Natural killer cell (primary cell): ENCODE measurements at regions of chr7 and their contacts with region 1.

Region 1: DNA sequence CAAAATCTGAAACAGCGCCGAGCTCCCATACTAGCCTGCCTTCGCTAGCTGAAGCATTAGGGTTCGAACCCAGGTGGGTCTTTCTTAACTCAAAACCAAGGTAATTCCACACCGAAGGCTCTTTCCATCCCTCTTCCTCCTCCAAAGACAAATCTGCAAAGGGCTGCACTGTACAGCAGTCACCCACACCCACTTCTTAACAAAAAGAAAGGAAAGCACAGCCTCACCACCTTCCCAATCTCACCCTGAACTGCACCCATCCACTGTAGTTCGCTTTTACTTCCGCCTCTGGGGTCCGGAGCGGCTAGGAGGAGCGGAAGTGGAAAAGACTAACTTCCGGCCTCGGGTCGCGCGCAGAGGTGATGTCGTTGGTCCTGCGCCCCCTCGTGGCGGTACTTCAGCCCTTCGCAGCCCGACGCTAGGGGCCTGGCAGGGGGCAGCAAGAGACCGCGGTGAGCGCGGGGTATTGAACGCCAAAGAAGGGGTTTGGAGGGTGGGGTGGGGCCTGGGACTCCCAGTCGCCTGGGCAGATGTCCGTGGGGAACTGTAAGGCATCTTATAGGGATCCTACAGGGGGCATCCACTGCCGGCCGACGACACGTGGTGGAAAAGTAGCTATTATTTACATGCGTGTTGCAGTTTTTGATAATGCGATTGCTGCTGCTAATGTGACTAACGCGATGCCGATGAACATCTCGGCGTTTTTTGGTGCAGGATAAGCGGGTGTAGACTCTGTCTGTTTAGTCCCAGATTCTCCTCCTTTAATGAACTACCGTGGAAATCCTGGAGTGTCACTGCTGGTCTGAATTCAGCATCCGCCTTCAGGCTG is at the start of gene MTERF1:
- DNase-seq: peak; percentile 89 to 97
- ATAC-seq: peak; percentile 96 to 99 (median 99)
- H3K4me3 ChIP-seq: peak within 1 kb of the TSS; percentile 82
- H3K4me3 Mint-ChIP-seq: peak within 1 kb of the TSS; percentile 97
- H3K27ac ChIP-seq: peak within 1 kb of the TSS; percentile 65
- H3K27ac Mint-ChIP-seq: peak within 1 kb of the TSS; percentile 88 to 96
- H3K4me1 ChIP-seq: peaks cover 14% of the 10 kb centered on the region
- H3K4me1 Mint-ChIP-seq: peaks cover 32 to 37% of the 10 kb centered on the region in 2 donors
- H3K27me3 ChIP-seq: no peaks in the 10 kb centered on the region
- H3K27me3 Mint-ChIP-seq: peaks cover 3 to 22% of the 10 kb centered on the region in 2 donors
- CTCF ChIP-seq: peak; percentile 96
- total RNA-seq, gene MTERF1: 15.7 to 20.0 (median 19.0) TPM

Region 2: DNA sequence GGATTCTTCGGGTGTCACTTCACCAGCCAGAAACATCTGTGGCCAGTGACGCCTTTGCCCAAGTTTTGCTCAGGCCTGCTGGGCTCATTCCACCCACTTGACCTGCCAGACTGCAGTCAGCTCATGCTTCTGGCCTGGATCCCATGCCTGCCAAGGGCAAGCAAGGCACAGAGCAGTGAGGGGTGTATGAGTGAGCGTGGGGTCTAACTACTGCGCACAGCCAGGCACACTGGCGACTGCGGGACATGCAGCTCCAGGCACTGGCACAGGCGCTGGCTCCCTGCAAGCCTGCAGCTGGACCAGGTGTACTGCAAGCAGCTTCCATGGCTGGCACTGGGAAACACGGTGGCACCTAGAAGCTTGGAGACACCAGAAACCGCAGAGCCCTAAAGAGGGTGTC is 80.2 kb before region 1 on chr7:
- intact Hi-C with region 1: no loop called
- DNase-seq: no peak
- ATAC-seq: no peak
- H3K4me3 ChIP-seq: no peak overlapping the region
- H3K4me3 Mint-ChIP-seq: no peak overlapping the region
- H3K27ac ChIP-seq: no peak overlapping the region
- H3K27ac Mint-ChIP-seq: no peak overlapping the region
- H3K4me1 ChIP-seq: no peaks in the 10 kb centered on the region
- H3K4me1 Mint-ChIP-seq: no peaks in the 10 kb centered on the region
- H3K27me3 ChIP-seq: no peaks in the 10 kb centered on the region
- H3K27me3 Mint-ChIP-seq: no peaks in the 10 kb centered on the region
- CTCF ChIP-seq: no peak

Region 3: GRCh38 chr7:91940572-91941341 is 60.1 kb after region 1 on chr7 and contains the start of gene AKAP9:
- intact Hi-C with region 1: loop called (anchors 2 kb)
- DNase-seq: peak; percentile 82 to 91
- ATAC-seq: peak; percentile 88 to 92 (median 92)
- H3K4me3 ChIP-seq: peak within 1 kb of the TSS; percentile 95
- H3K4me3 Mint-ChIP-seq: peak within 1 kb of the TSS; percentile 96
- H3K27ac ChIP-seq: peak within 1 kb of the TSS; percentile 98
- H3K27ac Mint-ChIP-seq: peak within 1 kb of the TSS; percentile 91 to 96
- H3K4me1 ChIP-seq: peaks cover 10% of the 10 kb centered on the region
- H3K4me1 Mint-ChIP-seq: peaks cover 29 to 35% of the 10 kb centered on the region in 2 donors
- H3K27me3 ChIP-seq: no peaks in the 10 kb centered on the region
- H3K27me3 Mint-ChIP-seq: peaks cover 8 to 9% of the 10 kb centered on the region in 2 donors
- CTCF ChIP-seq: no peak
- total RNA-seq, gene AKAP9: 78.8 to 93.0 (median 81.9) TPM